ENCODE measurements at regions of chr10 and their contacts with region 1.

Region 1: GRCh38 chr10:117174439-117175214 is 22.7 kb upstream of the KCNK18 start:
- DNase-seq: peak; percentile 84
- CTCF ChIP-seq: peak; percentile 72

Region 2: GRCh38 chr10:116688241-116688711 is 486.4 kb before region 1 on chr10:
- CTCF ChIA-PET with region 1: interaction called, 13 read pairs
- POLR2A ChIA-PET with region 1: no interaction called
- DNase-seq: no peak
- CTCF ChIP-seq: no peak

Region 3: GRCh38 chr10:116796910-116797513 is 377.6 kb before region 1 on chr10:
- CTCF ChIA-PET with region 1: interaction called, 183 read pairs
- POLR2A ChIA-PET with region 1: no interaction called
- DNase-seq: peak; percentile 78
- CTCF ChIP-seq: peak; percentile 87

Region 4: DNA sequence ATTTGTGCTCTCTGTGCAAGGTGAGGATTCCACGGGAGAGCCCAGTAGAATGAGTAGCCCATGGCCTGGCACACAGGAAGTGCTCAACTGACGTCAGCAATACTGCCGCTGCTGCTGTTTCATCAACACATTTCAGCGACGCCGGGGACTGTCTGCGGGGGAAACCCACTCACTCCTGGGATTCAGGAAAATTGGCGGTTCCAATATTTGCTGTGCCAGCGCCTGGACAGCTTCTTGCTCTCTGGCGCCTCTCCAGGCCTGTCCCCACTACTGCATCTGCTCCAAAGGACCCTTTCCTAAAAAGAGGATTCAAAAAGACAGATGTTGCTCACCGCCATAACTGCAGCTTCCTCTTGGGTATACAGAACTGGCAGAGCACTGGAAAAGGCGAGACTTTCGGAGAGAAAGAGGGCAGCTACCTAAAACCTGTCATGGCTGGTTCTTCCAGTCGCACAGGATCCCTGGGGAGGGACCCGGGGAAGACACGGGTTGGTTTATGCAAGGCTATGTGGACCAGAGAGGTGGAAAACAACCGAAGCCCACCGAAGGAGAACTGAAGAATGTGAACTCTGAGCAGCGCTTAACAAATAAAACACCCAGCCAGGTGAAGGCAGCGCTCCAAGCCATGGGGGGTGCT is 365.0 kb before region 1 on chr10:
- CTCF ChIA-PET with region 1: interaction called, 19 read pairs
- POLR2A ChIA-PET with region 1: no interaction called
- DNase-seq: no peak
- CTCF ChIP-seq: peak; percentile 5

Region 5: GRCh38 chr10:117148284-117148683 is 26.3 kb before region 1 on chr10:
- CTCF ChIA-PET with region 1: interaction called, 10 read pairs
- POLR2A ChIA-PET with region 1: no interaction called
- DNase-seq: no peak
- CTCF ChIP-seq: no peak

Region 6: GRCh38 chr10:117186832-117187615 is 12.4 kb after region 1 on chr10:
- CTCF ChIA-PET with region 1: interaction called, 21 read pairs
- POLR2A ChIA-PET with region 1: no interaction called
- DNase-seq: no peak
- CTCF ChIP-seq: no peak

Region 7: DNA sequence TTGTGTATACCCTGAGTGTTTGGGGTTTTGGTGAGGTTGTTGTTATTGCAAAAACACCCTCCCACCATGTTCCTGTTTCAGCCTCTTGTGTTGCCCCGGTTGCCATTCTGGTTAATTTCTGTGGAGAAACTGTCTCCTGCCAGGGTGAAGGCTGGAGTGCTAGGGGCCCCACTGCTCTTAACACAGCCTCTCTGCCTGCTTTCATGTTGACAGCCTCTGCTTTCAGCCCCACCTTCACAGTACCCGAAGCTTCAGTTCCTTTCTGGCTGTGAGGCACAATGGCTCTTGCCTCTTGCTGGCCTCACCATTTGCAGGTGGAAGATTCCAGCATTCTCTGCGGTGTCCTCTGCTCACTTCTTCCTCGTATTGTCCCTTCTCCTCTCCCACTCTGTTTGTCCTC is 85.5 kb after region 1 on chr10:
- CTCF ChIA-PET with region 1: no interaction called
- POLR2A ChIA-PET with region 1: no interaction called
- DNase-seq: no peak
- CTCF ChIP-seq: no peak

Measured in GM10248 (cell line).